A549 (cell line): ENCODE measurements at regions of chr4 and their contacts with region 1.

Region 1: GRCh38 chr4:56840559-56840958 is 19.1 kb upstream of the SPINK2 start:
- DNase-seq: no peak
- ATAC-seq: no peak
- H3K4me3 ChIP-seq: no peak overlapping the region
- H3K27ac ChIP-seq: no peak overlapping the region
- H3K4me1 ChIP-seq: no peaks in the 10 kb centered on the region
- CTCF ChIP-seq: no peak
- EP300 ChIP-seq: no peak
- POLR2A ChIP-seq: no peak
- RAD21 ChIP-seq: no peak

Region 2: GRCh38 chr4:56460085-56460484 is 380.5 kb before region 1 on chr4:
- CTCF ChIA-PET with region 1: no interaction called
- POLR2A ChIA-PET with region 1: interaction called, 10 read pairs
- DNase-seq: no peak
- ATAC-seq: no peak
- H3K4me3 ChIP-seq: no peak overlapping the region
- H3K27ac ChIP-seq: peak overlapping the region in 1 of 2 experiments; percentile 27; a peak in 1 of 6 replicates
- H3K4me1 ChIP-seq: peaks cover 10% of the 10 kb centered on the region; the same call in 2 of the 3 replicates
- CTCF ChIP-seq: no peak
- EP300 ChIP-seq: no peak
- POLR2A ChIP-seq: no peak
- RAD21 ChIP-seq: no peak

Region 3: DNA sequence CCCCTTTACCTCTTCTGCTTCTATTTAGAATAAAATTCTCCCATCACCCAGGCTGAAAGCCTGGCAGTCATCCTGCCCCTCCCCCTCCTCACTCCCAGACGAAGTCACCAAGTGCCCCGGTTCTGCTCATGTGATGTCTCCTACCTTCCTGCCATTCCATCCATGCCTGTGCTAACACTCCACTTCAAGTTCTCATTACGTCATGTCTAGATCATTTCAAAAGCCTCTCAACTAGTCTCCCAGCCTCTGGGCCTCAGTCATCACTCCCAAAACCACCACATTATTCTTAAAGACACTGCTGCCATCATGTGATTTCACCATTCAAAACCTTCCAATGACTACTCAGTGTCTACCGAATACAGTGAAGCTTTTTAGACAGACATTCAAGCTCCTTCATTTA is 142.2 kb before region 1 on chr4:
- CTCF ChIA-PET with region 1: no interaction called
- POLR2A ChIA-PET with region 1: no interaction called
- DNase-seq: no peak
- ATAC-seq: no peak
- H3K4me3 ChIP-seq: no peak overlapping the region
- H3K27ac ChIP-seq: no peak overlapping the region
- H3K4me1 ChIP-seq: no peaks in the 10 kb centered on the region
- CTCF ChIP-seq: no peak
- EP300 ChIP-seq: no peak
- POLR2A ChIP-seq: no peak
- RAD21 ChIP-seq: no peak

Region 4: GRCh38 chr4:56799824-56800756 is 40.5 kb before region 1 on chr4:
- CTCF ChIA-PET with region 1: interaction called, 10 read pairs
- POLR2A ChIA-PET with region 1: interaction called, 3 read pairs
- DNase-seq: peak; percentile 48 to 77
- ATAC-seq: peak; percentile 99 to 100
- H3K4me3 ChIP-seq: peak overlapping the region; percentile 54
- H3K27ac ChIP-seq: peak overlapping the region; percentile 65 to 82
- H3K4me1 ChIP-seq: no peaks in the 10 kb centered on the region
- CTCF ChIP-seq: peak; percentile 76
- EP300 ChIP-seq: no peak
- POLR2A ChIP-seq: no peak
- RAD21 ChIP-seq: peak; percentile 90 to 94